ENCODE measurements at regions of chr3 and their contacts with region 1.

Region 1: GRCh38 chr3:10164546-10165393 is at the start of gene IRAK2:
- DNase-seq: peak; percentile 62
- ATAC-seq: peak; percentile 88
- H3K4me3 Mint-ChIP-seq: peak within 1 kb of the TSS; percentile 72
- H3K27ac Mint-ChIP-seq: peak within 1 kb of the TSS; percentile 15
- H3K4me1 Mint-ChIP-seq: peaks cover 12% of the 10 kb centered on the region
- H3K27me3 Mint-ChIP-seq: no peaks in the 10 kb centered on the region
- CTCF ChIP-seq: peak; percentile 99
- total RNA-seq, gene IRAK2: 3.0 TPM

Region 2: GRCh38 chr3:10149226-10149625 is 15.5 kb before region 1 on chr3:
- CTCF ChIA-PET with region 1: interaction called, 16 read pairs
- POLR2A ChIA-PET with region 1: interaction called, 5 read pairs
- intact Hi-C with region 1: no loop called
- DNase-seq: no peak
- ATAC-seq: no peak
- H3K4me3 Mint-ChIP-seq: no peak overlapping the region
- H3K27ac Mint-ChIP-seq: peak overlapping the region; percentile 46
- H3K4me1 Mint-ChIP-seq: peaks cover 18% of the 10 kb centered on the region
- H3K27me3 Mint-ChIP-seq: no peaks in the 10 kb centered on the region
- CTCF ChIP-seq: no peak

Region 3: DNA sequence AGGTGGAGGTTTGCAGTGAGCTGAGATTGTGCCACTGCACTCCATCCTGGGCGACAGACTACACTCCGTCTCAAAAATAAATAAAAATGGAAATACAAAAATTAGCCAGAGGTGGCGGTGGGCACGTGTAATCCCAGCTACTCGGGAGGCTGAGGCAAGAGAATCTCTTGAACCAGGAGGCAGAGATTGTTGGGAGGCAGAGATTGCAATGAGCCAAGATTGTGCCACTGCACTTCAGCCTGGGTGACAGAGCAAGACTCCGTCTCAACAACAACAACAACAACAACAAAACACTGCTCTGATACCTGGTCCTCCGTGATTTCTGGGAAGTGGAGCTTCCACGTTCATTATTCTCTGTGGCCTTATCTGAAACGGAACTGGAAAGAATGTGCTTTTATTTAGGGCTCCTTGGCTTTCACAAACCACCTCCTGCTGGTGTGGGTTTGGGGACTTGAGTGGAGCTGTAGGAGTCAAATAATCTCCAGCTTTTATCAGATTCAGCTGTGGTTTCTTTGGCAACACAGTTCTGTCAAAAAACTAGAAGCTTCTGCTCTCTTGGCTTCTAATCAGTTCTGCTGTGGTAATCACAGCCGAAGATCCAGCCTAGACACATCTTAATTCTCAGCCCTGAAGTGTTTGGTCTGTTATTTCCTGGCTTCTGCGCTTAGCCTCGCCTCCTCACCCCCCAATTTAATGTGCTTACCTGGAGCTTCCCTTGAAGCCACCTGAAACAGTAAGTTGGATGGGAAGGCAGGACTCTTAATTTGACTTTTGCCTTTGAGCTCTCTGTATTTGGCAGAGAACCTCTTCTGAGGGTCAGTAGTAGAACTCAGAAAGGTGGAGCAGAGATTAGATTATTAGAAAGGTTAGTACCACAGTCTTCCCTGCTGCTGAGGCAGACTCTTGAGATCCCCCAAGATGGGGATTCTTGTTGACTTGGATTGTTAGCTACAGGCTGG is 21.3 kb after region 1 on chr3:
- CTCF ChIA-PET with region 1: interaction called, 15 read pairs
- POLR2A ChIA-PET with region 1: no interaction called
- intact Hi-C with region 1: no loop called
- DNase-seq: no peak
- ATAC-seq: peak; percentile 29
- H3K4me3 Mint-ChIP-seq: no peak overlapping the region
- H3K27ac Mint-ChIP-seq: peak overlapping the region; percentile 79
- H3K4me1 Mint-ChIP-seq: peaks cover 54% of the 10 kb centered on the region
- H3K27me3 Mint-ChIP-seq: no peaks in the 10 kb centered on the region
- CTCF ChIP-seq: no peak

Region 4: GRCh38 chr3:10192953-10193691 is 28.4 kb after region 1 on chr3:
- CTCF ChIA-PET with region 1: interaction called, 15 read pairs
- POLR2A ChIA-PET with region 1: no interaction called
- intact Hi-C with region 1: no loop called
- DNase-seq: peak; percentile 83
- ATAC-seq: peak; percentile 29
- H3K4me3 Mint-ChIP-seq: peak overlapping the region; percentile 55
- H3K27ac Mint-ChIP-seq: peak overlapping the region; percentile 98
- H3K4me1 Mint-ChIP-seq: peaks cover 83% of the 10 kb centered on the region
- H3K27me3 Mint-ChIP-seq: no peaks in the 10 kb centered on the region
- CTCF ChIP-seq: peak; percentile 32